Posterior cingulate gyrus (tissue), 11 donors: ENCODE measurements at regions of chr1 and their contacts with region 1.

Region 1: DNA sequence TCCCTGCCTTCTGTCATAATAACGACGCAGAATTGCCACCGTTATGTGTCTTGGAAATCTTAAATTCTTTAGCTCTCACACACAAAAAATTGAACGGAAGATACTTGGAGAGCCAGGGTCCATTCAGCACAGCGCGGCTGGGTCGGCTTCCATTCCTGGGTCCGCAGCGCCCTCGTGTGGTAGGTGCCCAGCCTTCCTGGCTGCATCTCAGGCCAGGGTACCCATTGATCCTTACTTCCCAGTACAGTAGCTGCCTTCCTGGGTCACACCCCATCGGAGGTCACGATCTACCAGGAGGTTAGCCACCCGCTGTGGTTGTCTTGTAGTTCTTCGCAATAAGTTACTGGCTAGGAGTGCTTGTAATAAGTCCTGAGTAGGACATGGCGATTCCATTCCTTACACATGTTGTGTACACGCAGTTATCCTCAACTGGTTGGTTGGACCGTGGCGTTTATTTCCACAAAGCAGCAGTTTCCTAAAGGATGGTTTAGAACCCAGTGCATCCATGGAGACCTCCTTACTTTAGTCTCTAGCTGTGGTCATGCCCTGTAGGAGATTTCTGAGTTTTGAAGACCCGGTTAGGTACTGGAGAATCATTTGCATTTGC is 9.9 kb upstream of the MTARC1 start:
- DNase-seq: peak; percentile 67 to 97 (median 86)

Region 2: DNA sequence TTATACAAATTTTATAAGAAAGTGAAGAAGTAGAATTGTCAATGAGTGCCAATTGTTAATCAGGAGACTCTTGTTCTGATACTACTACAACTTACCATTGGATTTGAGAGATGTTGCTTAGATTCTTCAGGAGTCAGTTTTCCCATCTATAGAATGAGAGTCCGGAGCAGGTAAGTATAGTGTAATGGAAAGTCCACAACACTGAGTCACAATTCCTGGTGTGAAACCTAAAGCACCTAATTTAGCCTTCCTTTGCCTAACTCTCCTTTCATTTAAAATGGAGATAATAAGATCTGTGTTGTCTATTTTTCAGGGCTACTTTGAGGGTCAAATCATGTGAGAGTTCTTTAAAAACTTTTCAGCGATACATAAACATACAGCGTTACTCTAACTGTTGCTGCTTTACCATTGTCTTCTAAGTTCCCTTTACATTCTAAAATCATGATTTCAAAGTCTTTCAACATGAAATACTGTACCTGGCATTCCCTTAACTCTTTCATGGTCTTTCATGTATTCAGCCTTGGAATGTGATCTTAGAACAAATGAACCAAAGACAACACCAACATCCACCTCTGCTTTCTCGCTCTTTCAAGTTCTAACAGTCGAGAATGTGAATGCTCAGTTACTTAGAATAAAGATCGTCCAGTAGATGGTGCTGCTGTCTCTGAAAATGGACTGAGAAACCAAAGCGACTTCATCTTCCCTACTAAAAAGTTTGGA is 939.4 kb before region 1 on chr1:
- intact Hi-C with region 1: loop called (anchors 5 kb)
- DNase-seq: no peak

Region 3: GRCh38 chr1:220189750-220190347 is 587.0 kb before region 1 on chr1:
- intact Hi-C with region 1: loop called (anchors 10 kb)
- DNase-seq: no peak

Region 4: GRCh38 chr1:220680085-220680687 is 96.6 kb before region 1 on chr1:
- intact Hi-C with region 1: loop called (anchors 2 kb)
- DNase-seq: no peak

Region 5: DNA sequence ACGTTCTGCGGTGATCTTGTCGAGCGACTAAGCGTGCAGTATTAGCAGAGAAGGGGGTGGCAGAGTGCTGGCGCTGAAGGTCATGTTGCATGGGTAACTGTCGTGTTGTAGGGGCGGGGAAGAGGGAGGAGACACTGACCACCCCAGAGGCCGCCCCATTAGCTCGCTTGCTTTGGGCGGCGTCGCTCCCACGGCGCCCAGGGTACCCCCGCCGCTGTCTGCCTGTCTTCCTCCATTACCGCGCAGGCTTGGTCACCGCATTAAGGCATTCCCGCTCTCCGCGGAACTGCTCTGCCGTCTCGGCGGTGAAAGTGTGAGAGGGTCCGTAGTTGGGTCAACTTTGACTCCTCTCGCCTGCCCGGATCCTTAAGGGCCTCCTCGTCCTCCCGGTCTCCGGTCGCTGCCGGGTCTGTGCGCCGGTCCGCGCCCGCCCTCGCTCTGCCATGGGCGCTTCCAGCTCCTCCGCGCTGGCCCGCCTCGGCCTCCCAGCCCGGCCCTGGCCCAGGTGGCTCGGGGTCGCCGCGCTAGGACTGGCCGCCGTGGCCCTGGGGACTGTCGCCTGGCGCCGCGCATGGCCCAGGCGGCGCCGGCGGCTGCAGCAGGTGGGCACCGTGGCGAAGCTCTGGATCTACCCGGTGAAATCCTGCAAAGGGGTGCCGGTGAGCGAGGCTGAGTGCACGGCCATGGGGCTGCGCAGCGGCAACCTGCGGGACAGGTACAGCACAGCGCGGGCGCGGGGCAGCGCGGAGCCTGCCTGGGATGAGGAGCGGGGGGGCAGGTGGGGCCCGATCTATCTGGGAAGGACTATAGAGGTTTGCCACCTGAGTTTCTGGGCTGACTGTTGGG is 28.5 kb before region 1 on chr1 and contains the start of gene MTARC2:
- intact Hi-C with region 1: no loop called
- DNase-seq: peak; percentile 36 to 93 (median 59)

Region 6: GRCh38 chr1:220843481-220844011 is 66.7 kb after region 1 on chr1:
- intact Hi-C with region 1: no loop called
- DNase-seq: peak in 1 of 10 donors; percentile 12